ENCODE measurements at regions of chr1 and their contacts with region 1.

Region 1: GRCh38 chr1:53945433-53946251 is at the start of gene IFT25:
- DNase-seq: peak; percentile 98 to 100
- ATAC-seq: peak; percentile 81 to 94 (median 81)
- H3K4me3 ChIP-seq: peak within 1 kb of the TSS; percentile 97
- H3K4me3 Mint-ChIP-seq: peak within 1 kb of the TSS; percentile 96
- H3K27ac ChIP-seq: peak within 1 kb of the TSS; percentile 88
- H3K27ac Mint-ChIP-seq: peak within 1 kb of the TSS; percentile 89 to 97
- H3K4me1 ChIP-seq: peaks cover 24% of the 10 kb centered on the region
- H3K4me1 Mint-ChIP-seq: peaks cover 44 to 53% of the 10 kb centered on the region in 2 donors
- H3K27me3 ChIP-seq: no peaks in the 10 kb centered on the region
- H3K27me3 Mint-ChIP-seq: no peaks in the 10 kb centered on the region
- CTCF ChIP-seq: no peak
- total RNA-seq, gene IFT25: 41.5 to 54.6 (median 41.6) TPM

Region 2: DNA sequence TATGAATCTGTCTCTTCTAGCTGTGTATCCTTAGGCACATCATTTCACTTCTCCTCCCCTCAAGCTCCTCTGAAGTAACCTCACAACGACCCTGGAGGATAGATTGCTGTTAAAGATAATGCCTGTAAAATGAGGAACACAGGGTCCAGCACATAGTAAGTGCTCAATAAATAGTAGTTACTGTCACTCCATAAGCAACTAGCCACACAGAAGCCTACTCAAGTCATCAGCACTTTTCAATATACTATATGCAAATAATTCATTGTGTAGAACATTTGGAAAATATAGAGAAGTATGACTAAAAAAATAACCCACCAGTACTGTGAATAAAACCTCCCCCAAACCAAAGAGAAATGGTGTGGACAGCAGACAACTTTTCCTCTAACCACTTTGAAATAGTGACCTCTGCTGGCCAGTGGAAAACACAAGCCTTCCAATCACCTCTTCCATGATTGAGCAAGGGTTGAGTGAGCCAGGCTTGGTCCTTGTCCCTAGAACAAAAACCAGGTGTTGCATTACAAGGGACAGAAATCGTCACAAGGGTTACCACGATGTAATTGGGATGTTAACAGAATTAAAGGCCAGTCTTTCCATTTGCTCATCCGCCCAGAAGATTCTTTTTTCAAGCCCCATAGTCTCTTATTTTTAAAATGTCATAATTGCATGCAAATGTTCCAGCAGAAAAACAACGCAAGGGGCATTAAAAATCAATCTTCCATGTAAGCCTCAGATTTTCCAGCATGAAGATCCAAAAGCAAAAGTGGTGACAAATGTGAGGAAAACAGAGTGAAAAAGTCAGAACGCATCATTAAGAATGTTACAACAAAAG is 190.9 kb before region 1 on chr1:
- intact Hi-C with region 1: no loop called
- DNase-seq: peak in 1 of 2 donors; percentile 58
- ATAC-seq: peak in 1 of 3 donors; percentile 65
- H3K4me3 ChIP-seq: no peak overlapping the region
- H3K4me3 Mint-ChIP-seq: no peak overlapping the region
- H3K27ac ChIP-seq: no peak overlapping the region
- H3K27ac Mint-ChIP-seq: no peak overlapping the region
- H3K4me1 ChIP-seq: no peaks in the 10 kb centered on the region
- H3K4me1 Mint-ChIP-seq: no peaks in the 10 kb centered on the region
- H3K27me3 ChIP-seq: no peaks in the 10 kb centered on the region
- H3K27me3 Mint-ChIP-seq: no peaks in the 10 kb centered on the region
- CTCF ChIP-seq: peak; percentile 70

Region 3: DNA sequence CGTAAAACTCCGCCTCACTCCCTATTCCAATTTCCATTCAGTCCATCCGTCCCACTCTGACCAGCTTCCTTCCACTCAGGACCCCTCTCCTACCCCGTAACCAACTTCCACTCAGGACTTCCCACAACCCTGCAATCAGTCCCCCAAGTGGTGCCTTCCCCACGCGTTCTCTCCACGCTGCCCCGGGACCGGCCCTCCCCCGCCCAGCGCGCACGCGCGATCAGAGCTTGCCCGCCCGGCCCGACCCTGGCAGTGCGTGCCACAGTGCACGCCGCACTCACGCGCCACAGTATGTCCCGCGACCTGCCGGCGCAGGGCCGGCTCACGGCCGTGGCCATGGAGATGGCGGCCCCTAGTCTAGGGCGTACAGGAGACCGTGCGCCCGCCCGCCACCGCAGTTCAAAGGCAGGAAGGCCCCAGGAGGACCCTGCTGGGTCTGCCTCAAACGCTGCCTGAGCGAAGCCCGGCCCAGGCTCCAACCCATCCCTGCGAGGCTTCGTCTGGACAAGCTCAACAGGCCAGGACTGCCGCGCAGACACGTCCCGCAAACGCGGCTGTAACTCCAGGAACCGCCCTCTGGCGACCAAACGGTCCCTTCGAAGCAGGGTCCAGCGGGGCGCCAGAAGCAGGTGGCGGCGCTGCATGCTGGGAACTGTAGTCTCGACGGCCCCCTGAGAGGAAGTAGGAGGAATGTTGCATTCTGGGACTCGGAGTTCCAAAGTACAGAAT is 107.6 kb before region 1 on chr1 and contains the start of gene NDC1:
- intact Hi-C with region 1: loop called (anchors 1 kb)
- DNase-seq: peak; percentile 84 to 95
- ATAC-seq: peak; percentile 89 to 96 (median 90)
- H3K4me3 ChIP-seq: peak within 1 kb of the TSS; percentile 83
- H3K4me3 Mint-ChIP-seq: peak within 1 kb of the TSS; percentile 98
- H3K27ac ChIP-seq: peak within 1 kb of the TSS; percentile 97
- H3K27ac Mint-ChIP-seq: peak within 1 kb of the TSS; percentile 95 to 98
- H3K4me1 ChIP-seq: peaks cover 7% of the 10 kb centered on the region
- H3K4me1 Mint-ChIP-seq: peaks cover 19 to 23% of the 10 kb centered on the region in 2 donors
- H3K27me3 ChIP-seq: no peaks in the 10 kb centered on the region
- H3K27me3 Mint-ChIP-seq: no peaks in the 10 kb centered on the region
- CTCF ChIP-seq: no peak
- total RNA-seq, gene NDC1: 4.3 to 6.3 (median 5.2) TPM

Region 4: GRCh38 chr1:53878492-53879105 is 67.0 kb before region 1 on chr1:
- intact Hi-C with region 1: loop called (anchors 1 kb)
- DNase-seq: peak in 1 of 2 donors; percentile 46
- ATAC-seq: no peak
- H3K4me3 ChIP-seq: no peak overlapping the region
- H3K4me3 Mint-ChIP-seq: no peak overlapping the region
- H3K27ac ChIP-seq: no peak overlapping the region
- H3K27ac Mint-ChIP-seq: no peak overlapping the region
- H3K4me1 ChIP-seq: no peaks in the 10 kb centered on the region
- H3K4me1 Mint-ChIP-seq: peaks cover 0 to 6% of the 10 kb centered on the region in 2 donors
- H3K27me3 ChIP-seq: no peaks in the 10 kb centered on the region
- H3K27me3 Mint-ChIP-seq: no peaks in the 10 kb centered on the region
- CTCF ChIP-seq: peak; percentile 64

Region 5: DNA sequence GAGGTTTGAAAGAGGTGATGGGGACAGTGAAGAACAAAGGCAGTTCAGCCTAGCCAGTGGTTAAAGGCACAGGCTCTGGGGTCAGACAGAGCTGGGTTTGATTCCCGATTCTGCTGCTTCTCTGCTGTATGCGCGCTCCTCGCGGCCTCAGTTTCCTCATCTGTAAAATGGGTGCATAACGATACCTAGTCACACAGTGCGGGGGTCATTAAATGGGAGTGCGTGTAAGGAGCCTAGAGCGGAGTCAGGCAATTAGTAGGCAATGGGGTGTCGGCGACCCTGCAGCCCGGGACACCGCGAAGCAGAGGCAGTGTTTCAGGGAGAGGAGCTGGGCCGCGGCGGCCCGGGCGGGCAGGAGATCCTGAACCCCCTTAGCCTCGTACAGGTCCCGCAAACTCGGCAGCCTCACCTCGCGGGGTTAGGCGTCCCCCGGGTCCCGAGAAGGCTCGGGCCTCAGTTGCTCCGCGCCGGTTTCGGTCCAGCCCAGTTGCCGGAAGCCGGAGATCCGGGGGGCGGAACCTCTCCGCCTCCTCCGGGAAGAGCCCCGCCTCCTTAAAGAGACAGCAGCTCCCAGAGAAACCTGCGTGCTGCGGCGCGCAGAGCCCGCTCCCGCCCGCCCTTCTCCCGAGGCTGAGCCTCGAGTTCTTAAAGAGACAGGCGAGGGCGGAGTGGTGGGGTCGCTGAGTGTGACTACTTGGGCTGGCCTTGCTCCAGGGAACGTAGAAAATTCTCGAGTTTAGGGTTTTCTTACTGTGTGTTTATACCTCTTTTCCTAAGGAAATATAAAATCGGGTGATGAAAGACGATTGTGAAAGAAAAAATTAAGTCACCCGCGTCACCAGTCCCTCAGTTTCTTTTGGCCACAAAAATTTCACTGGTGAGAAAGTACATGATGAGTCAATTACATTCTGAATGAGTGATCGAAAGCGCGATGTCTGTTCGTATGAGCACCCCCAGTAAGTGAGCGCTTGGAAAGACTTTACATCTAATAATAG is 56.0 kb before region 1 on chr1 and contains the start of gene YIPF1:
- intact Hi-C with region 1: loop called (anchors 1 kb)
- DNase-seq: peak; percentile 75 to 91
- ATAC-seq: peak; percentile 95 to 98 (median 96)
- H3K4me3 ChIP-seq: peak within 1 kb of the TSS; percentile 95
- H3K4me3 Mint-ChIP-seq: peak within 1 kb of the TSS; percentile 97
- H3K27ac ChIP-seq: peak within 1 kb of the TSS; percentile 61
- H3K27ac Mint-ChIP-seq: peak within 1 kb of the TSS; percentile 92 to 95
- H3K4me1 ChIP-seq: peaks cover 13% of the 10 kb centered on the region
- H3K4me1 Mint-ChIP-seq: peaks cover 37 to 40% of the 10 kb centered on the region in 2 donors
- H3K27me3 ChIP-seq: no peaks in the 10 kb centered on the region
- H3K27me3 Mint-ChIP-seq: peaks cover 0 to 3% of the 10 kb centered on the region in 2 donors
- CTCF ChIP-seq: no peak
- total RNA-seq, gene YIPF1: 13.2 to 20.8 (median 18.0) TPM

Region 6: GRCh38 chr1:54017979-54018378 is 72.3 kb after region 1 on chr1 and contains the start of gene LDLRAD1:
- intact Hi-C with region 1: no loop called
- DNase-seq: no peak
- ATAC-seq: no peak
- H3K4me3 ChIP-seq: no peak within 1 kb of the TSS
- H3K4me3 Mint-ChIP-seq: no peak within 1 kb of the TSS
- H3K27ac ChIP-seq: no peak within 1 kb of the TSS
- H3K27ac Mint-ChIP-seq: no peak within 1 kb of the TSS
- H3K4me1 ChIP-seq: no peaks in the 10 kb centered on the region
- H3K4me1 Mint-ChIP-seq: no peaks in the 10 kb centered on the region
- H3K27me3 ChIP-seq: no peaks in the 10 kb centered on the region
- H3K27me3 Mint-ChIP-seq: peaks cover 0 to 11% of the 10 kb centered on the region in 2 donors
- CTCF ChIP-seq: no peak
- total RNA-seq, gene LDLRAD1: not detected

Region 7: DNA sequence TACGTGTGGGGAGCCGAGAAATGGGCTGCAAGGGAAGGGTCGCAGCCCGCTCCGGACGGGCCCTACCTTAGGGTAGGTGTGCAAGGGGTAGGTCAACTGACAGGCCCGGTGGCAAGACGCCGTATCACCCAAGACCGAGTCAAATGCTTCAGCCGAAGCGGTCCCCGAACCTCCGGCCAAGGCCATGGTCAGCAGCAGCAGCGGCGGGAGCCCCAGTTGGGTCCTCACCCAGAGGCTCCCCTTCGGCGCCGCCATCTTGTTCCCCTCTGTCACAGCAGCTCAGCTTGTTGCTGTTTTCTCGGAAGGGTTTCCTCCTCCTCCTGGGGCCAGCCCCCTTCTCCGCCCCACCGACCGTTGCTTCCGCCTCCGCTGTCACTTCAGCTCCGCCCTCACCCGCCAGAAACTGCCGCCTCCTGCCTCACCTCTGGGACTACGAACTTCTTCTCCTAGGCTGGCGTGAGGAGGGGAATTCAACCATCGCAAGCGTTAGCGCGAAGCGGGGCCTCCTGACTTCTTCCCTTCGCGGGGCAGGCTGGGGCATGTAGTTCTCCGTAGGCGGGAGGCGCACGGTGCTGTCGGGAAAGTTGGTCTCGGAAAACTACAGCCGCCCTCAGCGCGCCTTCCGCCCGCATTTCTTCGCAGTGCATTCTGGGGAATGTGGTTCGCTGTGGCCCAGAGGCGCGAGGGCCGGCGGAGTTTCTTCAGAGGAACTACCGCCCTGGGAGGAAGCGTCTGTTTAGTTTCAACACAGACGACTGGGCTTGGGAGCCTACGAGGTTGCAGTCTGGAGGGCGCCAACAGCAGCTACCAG is 107.5 kb after region 1 on chr1 and contains the starts of genes TCEANC2 and TMEM59:
- intact Hi-C with region 1: loop called (anchors 1 kb)
- DNase-seq: peak; percentile 93 to 99
- ATAC-seq: peak; percentile 88 to 96 (median 90)
- H3K4me3 ChIP-seq: peak within 1 kb of the TSS; percentile 88
- H3K4me3 Mint-ChIP-seq: no peak within 1 kb of the TSS
- H3K27ac ChIP-seq: peak within 1 kb of the TSS; percentile 84
- H3K27ac Mint-ChIP-seq: no peak within 1 kb of the TSS
- H3K4me1 ChIP-seq: peaks cover 33% of the 10 kb centered on the region
- H3K4me1 Mint-ChIP-seq: peaks cover 23 to 24% of the 10 kb centered on the region in 2 donors
- H3K27me3 ChIP-seq: no peaks in the 10 kb centered on the region
- H3K27me3 Mint-ChIP-seq: no peaks in the 10 kb centered on the region
- CTCF ChIP-seq: no peak
- total RNA-seq, gene TCEANC2: 5.1 to 9.5 (median 7.3) TPM
- total RNA-seq, gene TMEM59: 187 to 202 (median 199) TPM

Measured in natural killer cell (primary cell).